IMR-90 (cell line): ENCODE measurements at regions of chr3 and their contacts with region 1.

Region 1: DNA sequence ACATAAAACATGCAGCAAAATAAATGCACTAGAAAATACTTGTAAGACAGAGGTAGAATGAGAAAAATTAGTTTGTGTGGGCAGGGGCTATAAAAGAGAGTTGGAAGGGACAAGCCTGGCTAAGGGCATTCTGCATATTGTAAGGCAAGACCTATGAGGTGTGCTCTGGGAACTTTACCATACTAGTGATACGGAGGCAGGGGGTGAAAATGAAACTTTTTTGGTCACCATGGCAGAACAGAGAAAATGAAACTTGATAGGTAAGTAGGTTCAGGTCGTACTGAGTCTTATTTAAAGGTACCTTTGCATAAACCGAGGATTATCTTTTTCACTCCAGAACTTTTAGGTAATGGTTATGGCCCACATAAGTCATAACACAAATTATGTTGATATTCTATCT is 74.7 kb upstream of the ACKR4 start:
- DNase-seq: no peak
- ATAC-seq: no peak
- H3K4me3 ChIP-seq: no peak overlapping the region
- H3K27ac ChIP-seq: no peak overlapping the region
- H3K4me1 ChIP-seq: no peaks in the 10 kb centered on the region
- H3K27me3 ChIP-seq: no peaks in the 10 kb centered on the region
- CTCF ChIP-seq: no peak
- POLR2A ChIP-seq: no peak
- RAD21 ChIP-seq: no peak

Region 2: GRCh38 chr3:131762981-131763564 is 759.3 kb before region 1 on chr3:
- CTCF ChIA-PET with region 1: no interaction called
- POLR2A ChIA-PET with region 1: no interaction called
- dilution Hi-C with region 1: no loop called
- in situ Hi-C with region 1: no loop called
- intact Hi-C with region 1: no loop called
- DNase-seq: no peak
- ATAC-seq: no peak
- H3K4me3 ChIP-seq: no peak overlapping the region
- H3K27ac ChIP-seq: no peak overlapping the region
- H3K4me1 ChIP-seq: no peaks in the 10 kb centered on the region
- H3K27me3 ChIP-seq: no peaks in the 10 kb centered on the region
- CTCF ChIP-seq: no peak
- POLR2A ChIP-seq: no peak
- RAD21 ChIP-seq: no peak

Region 3: GRCh38 chr3:132682201-132682600 is 159.8 kb after region 1 on chr3:
- CTCF ChIA-PET with region 1: no interaction called
- POLR2A ChIA-PET with region 1: no interaction called
- dilution Hi-C with region 1: no loop called
- in situ Hi-C with region 1: no loop called
- intact Hi-C with region 1: loop called (anchors 5 kb)
- DNase-seq: no peak
- ATAC-seq: no peak
- H3K4me3 ChIP-seq: no peak overlapping the region
- H3K27ac ChIP-seq: no peak overlapping the region
- H3K4me1 ChIP-seq: no peaks in the 10 kb centered on the region
- H3K27me3 ChIP-seq: no peaks in the 10 kb centered on the region
- CTCF ChIP-seq: no peak
- POLR2A ChIP-seq: no peak
- RAD21 ChIP-seq: no peak